ENCODE measurements at regions of chr12 and their contacts with region 1.

Region 1: DNA sequence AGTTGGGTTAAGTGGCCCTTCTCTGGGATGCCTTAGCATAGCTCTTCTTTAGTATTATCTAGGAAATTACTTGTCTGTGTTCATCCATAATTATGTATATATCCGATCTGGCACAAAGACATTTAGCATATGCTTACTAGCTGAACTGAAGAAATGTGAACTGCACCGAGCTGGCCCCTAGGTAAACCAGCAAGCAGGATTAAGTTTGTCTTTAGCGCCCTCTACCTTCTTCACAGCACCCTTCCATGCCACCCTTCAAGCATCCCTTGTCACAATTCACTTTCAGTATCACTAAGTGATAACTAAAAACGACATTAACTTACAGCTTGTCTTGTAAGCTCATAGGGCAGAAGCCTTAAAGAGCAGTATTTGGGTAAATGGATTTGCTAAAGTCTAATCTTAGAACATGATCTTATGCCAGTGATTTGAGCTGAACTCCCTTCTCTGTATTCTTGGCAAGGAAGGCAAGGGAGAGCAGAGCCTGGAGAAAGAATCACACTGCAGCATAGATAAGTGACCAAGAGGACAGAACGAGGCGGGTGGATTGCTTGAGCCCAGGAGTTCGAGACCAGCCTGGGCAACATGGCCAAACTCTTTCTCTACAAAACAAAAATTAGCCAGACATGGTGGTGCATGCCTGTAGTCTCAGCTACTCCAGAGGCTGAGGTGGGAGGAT is 2.6 kb upstream of the HAL start:
- DNase-seq: peak; percentile 50 to 74
- ATAC-seq: peak; percentile 83 to 96; a peak in 5 of 6 replicates
- H3K4me3 ChIP-seq: no peak overlapping the region
- H3K27ac ChIP-seq: no peak overlapping the region
- H3K4me1 ChIP-seq: peaks cover 27% of the 10 kb centered on the region; the same call in 2 of the 3 replicates
- CTCF ChIP-seq: peak; percentile 71
- EP300 ChIP-seq: no peak
- POLR2A ChIP-seq: no peak
- RAD21 ChIP-seq: peak; percentile 67 to 82

Region 2: GRCh38 chr12:95986635-95987570 is 11.8 kb before region 1 on chr12:
- CTCF ChIA-PET with region 1: interaction called, 26 read pairs
- POLR2A ChIA-PET with region 1: no interaction called
- DNase-seq: no peak
- ATAC-seq: no peak
- H3K4me3 ChIP-seq: no peak overlapping the region
- H3K27ac ChIP-seq: no peak overlapping the region
- H3K4me1 ChIP-seq: no peaks in the 10 kb centered on the region
- CTCF ChIP-seq: no peak
- EP300 ChIP-seq: no peak
- POLR2A ChIP-seq: no peak
- RAD21 ChIP-seq: no peak

Region 3: DNA sequence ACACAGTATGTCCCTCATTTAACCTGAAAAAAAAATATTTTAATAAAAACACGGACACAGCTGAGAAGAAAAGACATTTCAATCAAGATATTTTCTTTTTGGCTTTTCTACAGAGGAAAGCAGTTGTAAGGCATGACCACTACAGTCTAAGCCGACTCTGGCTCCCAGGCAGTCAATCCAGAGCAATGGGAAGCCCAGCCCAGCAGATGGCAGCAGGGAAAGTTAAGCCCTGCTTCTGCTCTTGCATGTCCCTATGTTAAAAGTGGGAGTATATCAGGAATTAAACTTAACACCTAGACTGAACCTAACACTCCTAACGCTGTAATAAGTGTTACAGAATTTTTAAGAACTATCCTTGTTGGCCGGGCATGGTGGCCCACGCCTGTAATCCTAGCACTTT is 16.9 kb after region 1 on chr12:
- CTCF ChIA-PET with region 1: interaction called, 18 read pairs
- POLR2A ChIA-PET with region 1: no interaction called
- DNase-seq: peak; percentile 27 to 62
- ATAC-seq: peak; percentile 96 to 97
- H3K4me3 ChIP-seq: no peak overlapping the region
- H3K27ac ChIP-seq: no peak overlapping the region
- H3K4me1 ChIP-seq: no peaks in the 10 kb centered on the region
- CTCF ChIP-seq: peak; percentile 39; the same call in 2 of the 3 replicates
- EP300 ChIP-seq: no peak
- POLR2A ChIP-seq: no peak
- RAD21 ChIP-seq: peak; percentile 35 to 46; a peak in 4 of 5 replicates

Region 4: DNA sequence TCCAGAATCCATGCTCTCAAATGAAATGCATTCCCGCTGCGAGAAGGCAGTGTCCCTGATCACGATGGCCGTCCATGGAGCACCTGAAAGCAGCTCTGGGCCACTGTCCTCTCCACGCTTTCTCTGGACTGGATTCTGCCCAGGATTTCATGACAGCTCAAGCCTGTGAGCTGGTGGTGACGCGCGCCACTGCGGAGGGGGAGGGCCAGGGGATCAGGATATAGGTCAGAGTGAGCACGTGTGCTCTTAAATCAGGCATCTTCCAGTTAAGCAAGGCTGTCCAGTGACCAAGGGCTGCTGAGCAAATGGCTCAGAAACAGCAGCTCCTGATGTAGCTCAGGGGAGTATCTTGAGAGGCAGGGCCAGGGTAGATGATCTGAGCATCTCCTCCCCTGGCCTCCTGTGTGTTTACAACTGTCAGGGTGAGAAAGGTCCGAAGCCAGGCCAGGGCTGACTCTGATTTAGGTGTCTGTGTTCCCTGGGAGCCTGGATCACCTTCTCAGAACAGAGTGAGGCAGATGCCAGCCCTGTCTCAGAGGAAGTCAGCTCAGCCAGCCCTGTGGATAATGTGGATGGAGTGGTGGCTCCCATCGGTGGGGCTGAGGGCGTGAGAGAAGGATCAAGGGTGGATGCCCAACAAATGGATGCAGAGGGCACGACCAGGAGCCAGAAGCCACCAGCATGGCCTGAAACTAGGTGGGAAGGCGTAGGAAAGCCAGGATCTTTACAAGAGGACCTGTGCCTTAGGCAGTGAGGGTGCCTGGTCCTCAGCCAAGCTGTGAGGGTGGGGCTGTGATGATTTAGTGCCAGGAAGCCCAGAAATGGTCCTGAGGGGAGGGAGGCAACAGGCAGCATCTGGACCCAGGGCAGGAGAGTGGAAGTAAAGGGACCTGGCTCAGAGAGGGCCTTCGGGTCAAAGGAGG is 250.7 kb after region 1 on chr12:
- CTCF ChIA-PET with region 1: no interaction called
- POLR2A ChIA-PET with region 1: no interaction called
- DNase-seq: no peak
- ATAC-seq: peak in 1 of 2 experiments; percentile 15; a peak in 2 of 6 replicates
- H3K4me3 ChIP-seq: no peak overlapping the region
- H3K27ac ChIP-seq: no peak overlapping the region
- H3K4me1 ChIP-seq: peaks cover 9% of the 10 kb centered on the region; the same call in 2 of the 3 replicates
- CTCF ChIP-seq: no peak
- EP300 ChIP-seq: no peak
- POLR2A ChIP-seq: no peak
- RAD21 ChIP-seq: no peak

Measured in A549 (cell line).